ENCODE measurements at regions of chr19 and their contacts with region 1.

Region 1: DNA sequence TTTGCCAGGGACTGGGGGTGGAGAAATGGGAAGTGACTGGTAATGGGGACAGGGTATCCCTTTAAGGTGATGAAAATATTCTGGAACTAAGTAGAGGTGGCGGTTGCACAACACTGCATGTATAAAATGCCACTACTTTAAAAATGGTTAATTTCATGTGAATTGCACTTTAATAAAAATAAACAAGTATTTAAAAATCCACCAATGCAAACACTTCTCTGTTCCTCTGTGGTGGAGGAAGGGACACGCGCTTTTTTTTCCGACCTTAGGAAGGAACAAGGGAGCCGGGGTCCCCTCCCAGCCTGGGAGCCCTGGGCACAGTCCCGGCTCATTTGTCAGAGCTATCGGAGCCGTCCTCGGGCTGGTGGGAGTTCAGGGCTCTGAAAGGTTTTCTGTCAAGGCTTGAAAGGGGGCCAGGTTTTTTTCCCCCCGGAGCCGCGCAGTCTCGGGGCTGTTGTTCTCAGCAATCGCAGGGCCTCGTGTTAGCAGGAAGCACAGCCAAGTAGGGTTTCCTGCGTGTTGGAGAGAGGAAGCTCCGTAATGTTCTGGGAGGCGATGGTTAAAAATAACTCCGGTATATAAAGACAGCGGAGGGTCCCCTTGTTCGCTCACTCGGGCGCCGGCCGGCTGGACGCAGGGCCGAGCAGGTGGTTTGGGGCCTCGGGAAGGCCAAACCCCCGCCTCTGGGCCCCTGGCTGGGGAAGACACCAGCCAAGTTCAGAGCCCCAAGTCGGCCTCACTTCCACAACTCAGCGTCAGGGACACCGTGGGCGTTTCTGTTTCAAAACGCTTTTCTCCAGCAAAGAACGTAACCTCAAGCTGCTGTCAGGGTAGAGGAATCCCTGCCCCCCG is 41.2 kb upstream of the KLF2 start:
- DNase-seq: peak; percentile 89
- ATAC-seq: peak; percentile 88

Region 2: GRCh38 chr19:16259385-16260159 is 23.9 kb before region 1 on chr19:
- intact Hi-C with region 1: loop called (anchors 2 kb)
- DNase-seq: no peak
- ATAC-seq: no peak

Region 3: GRCh38 chr19:16814526-16815100 is 531.2 kb after region 1 on chr19:
- intact Hi-C with region 1: no loop called
- DNase-seq: no peak
- ATAC-seq: no peak